Activated T-helper 1 cell treated with anti-CD3 and anti-CD28 coated beads, Interleukin-12 subunit alpha, Interleukin-12 subunit beta, Interleukin-2, Interleukin-4 antibody, amounts not matched to agents 30 ng/mL and 10 ng/mL and 1 ng/mL, durations not matched to agents 14 hours and 24 hours and 36 hours (primary cell): ENCODE measurements at regions of chr12 and their contacts with region 1.

Region 1: GRCh38 chr12:124453419-124454351 is 113.7 kb downstream of the NCOR2 start:
- DNase-seq: peak; percentile 74
- H3K4me3 Mint-ChIP-seq: peak overlapping the region; percentile 39
- H3K27ac Mint-ChIP-seq: peak overlapping the region; percentile 55
- H3K4me1 Mint-ChIP-seq: peaks cover 44% of the 10 kb centered on the region
- H3K27me3 Mint-ChIP-seq: peaks cover 2% of the 10 kb centered on the region

Region 2: DNA sequence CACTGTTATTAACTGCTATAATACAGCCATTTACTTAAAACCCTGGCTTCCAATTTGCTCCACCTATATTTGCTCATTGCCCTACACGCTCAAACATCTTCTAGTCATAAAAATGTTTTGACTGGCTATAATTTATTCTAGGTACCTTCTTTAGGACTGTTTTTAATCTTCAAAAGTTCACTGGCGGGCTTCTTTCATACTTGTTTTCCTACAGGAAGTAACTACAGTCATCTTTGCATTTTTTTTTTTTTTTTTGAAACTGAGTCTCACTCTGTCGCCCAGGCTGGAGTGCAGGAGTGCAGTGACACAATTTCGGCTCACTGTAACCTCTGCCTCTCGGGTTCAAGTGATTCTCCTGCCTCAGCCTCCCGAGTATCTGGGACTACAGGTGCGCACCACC is 1253.3 kb before region 1 on chr12:
- intact Hi-C with region 1: no loop called
- DNase-seq: no peak
- H3K4me3 Mint-ChIP-seq: no peak overlapping the region
- H3K27ac Mint-ChIP-seq: peak overlapping the region; percentile 68
- H3K4me1 Mint-ChIP-seq: peaks cover 21% of the 10 kb centered on the region
- H3K27me3 Mint-ChIP-seq: no peaks in the 10 kb centered on the region

Region 3: DNA sequence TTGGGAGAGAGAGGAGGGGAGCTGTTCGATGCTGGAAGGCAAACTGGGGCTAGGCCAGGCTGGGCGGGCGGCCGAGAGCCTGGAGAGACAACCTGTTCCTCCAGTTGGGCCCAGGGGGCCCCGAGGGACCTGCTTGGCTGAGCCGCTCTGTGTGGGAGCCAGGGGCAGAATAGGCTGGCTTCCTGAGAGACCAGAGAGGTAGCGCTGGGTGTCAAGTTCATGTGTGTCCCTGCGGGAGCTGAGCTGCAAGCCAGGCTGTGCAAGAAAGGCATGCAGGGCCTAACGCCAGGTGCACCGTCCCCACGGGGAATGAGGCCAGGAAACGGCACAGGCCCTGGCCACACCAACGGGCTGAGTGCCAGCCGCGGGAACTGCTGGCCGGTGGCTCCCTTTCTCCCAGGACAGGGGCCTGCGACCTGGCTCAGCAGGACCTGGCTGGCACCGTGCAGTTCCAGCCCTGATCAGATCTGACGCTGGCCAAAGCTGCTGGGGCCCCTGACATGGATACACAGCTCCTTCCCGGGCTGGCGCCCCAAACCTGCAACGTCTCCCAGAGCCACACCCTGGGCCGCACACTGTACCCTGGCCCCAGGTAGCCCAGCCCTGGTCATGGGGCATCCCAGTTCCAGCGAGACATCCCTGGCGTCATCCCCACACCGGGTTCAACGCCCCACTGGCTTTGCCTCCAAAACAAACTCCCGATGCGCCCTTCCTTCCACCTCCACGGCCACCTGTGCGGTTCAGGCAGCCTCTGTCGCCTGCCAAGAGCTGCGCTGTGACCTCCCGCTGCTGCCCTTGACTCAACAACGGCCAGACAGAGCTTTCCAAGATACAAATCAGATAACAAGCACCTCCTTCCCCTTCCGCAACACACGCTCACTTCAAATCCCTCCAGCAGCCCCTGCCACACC is 93.8 kb before region 1 on chr12:
- intact Hi-C with region 1: no loop called
- DNase-seq: no peak
- H3K4me3 Mint-ChIP-seq: no peak overlapping the region
- H3K27ac Mint-ChIP-seq: no peak overlapping the region
- H3K4me1 Mint-ChIP-seq: no peaks in the 10 kb centered on the region
- H3K27me3 Mint-ChIP-seq: no peaks in the 10 kb centered on the region

Region 4: GRCh38 chr12:124466216-124467128 is 12.8 kb after region 1 on chr12:
- intact Hi-C with region 1: loop called (anchors 1 kb)
- DNase-seq: peak; percentile 81
- H3K4me3 Mint-ChIP-seq: peak overlapping the region; percentile 49
- H3K27ac Mint-ChIP-seq: peak overlapping the region; percentile 68
- H3K4me1 Mint-ChIP-seq: peaks cover 20% of the 10 kb centered on the region
- H3K27me3 Mint-ChIP-seq: no peaks in the 10 kb centered on the region

Region 5: GRCh38 chr12:124493809-124494750 is 40.4 kb after region 1 on chr12:
- intact Hi-C with region 1: loop called (anchors 1 kb)
- DNase-seq: peak; percentile 11
- H3K4me3 Mint-ChIP-seq: peak overlapping the region; percentile 39
- H3K27ac Mint-ChIP-seq: peak overlapping the region; percentile 63
- H3K4me1 Mint-ChIP-seq: peaks cover 27% of the 10 kb centered on the region
- H3K27me3 Mint-ChIP-seq: no peaks in the 10 kb centered on the region

Region 6: GRCh38 chr12:124567661-124568373 is 114.1 kb after region 1 on chr12:
- intact Hi-C with region 1: loop called (anchors 1 kb)
- DNase-seq: peak; percentile 82
- H3K4me3 Mint-ChIP-seq: peak overlapping the region; percentile 85
- H3K27ac Mint-ChIP-seq: peak overlapping the region; percentile 84
- H3K4me1 Mint-ChIP-seq: peaks cover 24% of the 10 kb centered on the region
- H3K27me3 Mint-ChIP-seq: peaks cover 3% of the 10 kb centered on the region

Region 7: DNA sequence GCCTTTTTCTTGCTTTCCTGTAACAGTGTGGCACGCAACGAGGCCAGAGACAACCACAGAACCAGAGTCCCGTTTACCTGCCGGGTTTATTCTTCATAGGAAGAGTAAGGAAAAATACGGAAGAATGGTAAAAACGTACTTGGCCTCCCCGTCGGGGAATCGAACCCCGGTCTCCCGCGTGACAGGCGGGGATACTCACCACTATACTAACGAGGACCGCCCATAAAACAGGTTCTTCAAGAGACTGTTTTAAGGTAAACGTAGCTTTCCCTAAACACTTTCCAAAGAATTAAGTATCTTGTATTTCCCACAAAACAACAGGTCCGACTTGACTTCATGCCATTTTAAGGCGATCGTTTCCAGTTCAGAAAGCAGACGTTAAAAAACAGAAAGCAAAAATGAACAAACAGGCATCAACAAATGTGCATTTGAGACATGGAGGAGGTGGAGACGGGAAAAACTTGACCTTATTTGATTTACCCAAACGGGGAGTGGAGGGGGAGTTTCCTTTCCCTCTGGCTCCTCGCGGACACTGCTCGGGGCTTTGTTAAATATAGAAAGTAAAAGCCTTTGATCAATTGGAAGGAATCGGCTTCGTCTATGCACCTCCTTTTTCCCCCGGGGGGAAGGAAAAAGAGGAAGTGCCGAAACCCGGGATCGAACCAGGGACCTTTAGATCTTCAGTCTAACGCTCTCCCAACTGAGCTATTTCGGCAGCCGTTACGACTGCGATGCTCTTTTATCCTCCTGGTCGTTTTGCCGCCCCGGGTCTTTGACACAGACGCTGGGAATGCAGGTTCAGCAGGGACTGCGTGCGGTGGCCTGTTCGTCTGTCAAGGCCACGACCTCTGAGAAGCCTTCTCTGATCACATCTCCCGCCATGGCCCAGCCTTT is 473.8 kb after region 1 on chr12:
- intact Hi-C with region 1: loop called (anchors 10 kb)
- DNase-seq: peak; percentile 88
- H3K4me3 Mint-ChIP-seq: peak overlapping the region; percentile 88
- H3K27ac Mint-ChIP-seq: peak overlapping the region; percentile 98
- H3K4me1 Mint-ChIP-seq: peaks cover 42% of the 10 kb centered on the region
- H3K27me3 Mint-ChIP-seq: peaks cover 9% of the 10 kb centered on the region

Region 8: DNA sequence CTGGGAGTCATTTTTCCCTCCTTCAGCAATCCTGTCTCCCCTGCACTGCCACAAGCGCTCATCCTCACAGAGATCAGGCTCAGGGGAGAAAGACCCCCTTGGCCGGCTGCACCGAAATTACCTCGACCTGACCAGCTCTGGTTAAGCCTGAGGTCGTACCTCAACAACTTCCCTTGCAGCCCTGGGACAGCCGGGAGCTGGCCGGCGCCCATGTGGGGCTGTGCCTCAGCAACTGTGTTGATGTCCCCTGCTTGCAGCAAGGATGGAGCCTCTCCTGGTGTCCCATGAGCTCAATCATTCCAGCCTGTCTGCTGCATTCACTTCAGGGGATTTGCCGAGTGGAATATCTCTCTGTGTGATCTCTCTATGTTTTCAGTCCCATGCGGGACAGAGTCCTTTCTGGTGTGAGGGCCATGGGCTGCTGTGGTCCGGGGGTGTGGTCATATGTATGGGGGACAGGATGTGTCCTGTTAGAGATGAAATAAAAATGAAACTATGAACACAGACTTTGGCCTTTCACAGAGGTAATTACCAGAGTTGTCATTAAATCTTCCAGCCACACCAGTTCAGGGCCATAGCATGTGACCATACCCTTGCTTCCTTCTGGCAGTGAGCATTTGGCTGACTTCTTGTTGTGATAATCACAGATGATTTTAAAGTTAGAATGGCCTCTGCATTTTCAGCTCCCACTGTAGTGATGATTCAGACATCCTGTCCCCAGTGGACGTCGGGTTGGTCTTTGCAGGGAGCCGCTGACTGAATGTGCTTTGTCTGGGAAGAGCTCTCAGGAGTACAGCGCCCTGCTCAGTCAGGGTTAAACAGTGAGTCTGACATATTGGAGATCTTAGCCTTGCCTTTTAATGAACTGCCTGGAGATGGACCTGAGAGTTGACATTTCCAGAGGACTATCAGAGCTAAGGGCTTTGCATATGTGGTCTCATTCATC is 1017.4 kb after region 1 on chr12:
- intact Hi-C with region 1: no loop called
- DNase-seq: no peak
- H3K4me3 Mint-ChIP-seq: no peak overlapping the region
- H3K27ac Mint-ChIP-seq: no peak overlapping the region
- H3K4me1 Mint-ChIP-seq: no peaks in the 10 kb centered on the region
- H3K27me3 Mint-ChIP-seq: peaks cover 5% of the 10 kb centered on the region